ENCODE measurements at regions of chr4 and their contacts with region 1.

Region 1: DNA sequence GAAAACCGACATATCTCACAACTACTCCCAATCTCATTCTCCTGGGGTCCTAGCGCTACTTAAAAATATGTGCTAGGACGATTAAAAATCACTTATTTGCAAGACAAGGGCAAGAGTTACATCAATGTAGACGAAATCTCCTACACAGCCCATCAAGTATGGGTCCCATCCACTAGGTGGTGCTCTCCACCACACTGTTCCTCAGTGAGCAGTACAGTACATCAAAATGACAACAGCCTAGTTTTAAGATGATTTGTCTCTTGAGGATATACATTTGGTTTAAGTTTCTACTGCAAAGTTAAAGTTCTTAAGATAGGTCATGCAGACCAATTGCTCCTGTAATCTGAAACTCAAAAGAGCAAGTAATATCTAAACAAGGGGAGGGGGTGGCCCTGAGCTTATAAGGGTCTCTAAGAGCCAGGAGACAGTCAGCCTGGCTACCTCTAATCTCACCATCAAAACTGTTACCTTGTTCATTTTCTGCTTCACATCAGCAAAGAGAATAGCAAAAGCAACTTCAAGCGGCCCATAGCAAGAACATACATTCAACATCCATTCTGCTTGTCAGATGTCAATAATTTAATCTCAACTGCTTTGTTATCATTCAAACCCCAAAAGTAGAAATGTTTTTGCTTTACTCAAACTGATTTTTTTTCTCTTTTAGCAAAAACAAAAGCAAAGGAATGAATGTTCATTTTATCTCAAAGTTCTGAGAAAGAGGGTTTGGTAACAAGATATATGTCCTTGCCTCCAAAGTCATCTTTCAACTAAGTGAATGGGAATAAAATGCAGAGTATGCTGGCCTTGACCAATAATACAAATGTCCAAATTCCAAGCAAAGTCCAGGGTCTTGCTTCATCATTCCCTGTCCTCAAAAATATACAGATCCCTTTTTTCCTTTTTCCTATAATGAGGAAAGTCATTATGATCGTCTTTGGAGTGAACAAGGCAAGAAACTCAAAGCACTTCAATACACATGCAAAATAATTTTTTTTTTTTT is 53.1 kb downstream of the STX18 start:
- DNase-seq: peak; percentile 35
- ATAC-seq: peak; percentile 87
- H3K4me3 Mint-ChIP-seq: no peak overlapping the region
- H3K27ac Mint-ChIP-seq: no peak overlapping the region
- H3K4me1 Mint-ChIP-seq: peaks cover 21% of the 10 kb centered on the region
- H3K27me3 Mint-ChIP-seq: no peaks in the 10 kb centered on the region
- CTCF ChIP-seq: peak; percentile 94

Region 2: GRCh38 chr4:4507923-4508322 is 19.2 kb after region 1 on chr4:
- CTCF ChIA-PET with region 1: no interaction called
- POLR2A ChIA-PET with region 1: no interaction called
- intact Hi-C with region 1: loop called (anchors 1 kb)
- DNase-seq: no peak
- ATAC-seq: peak; percentile 28
- H3K4me3 Mint-ChIP-seq: no peak overlapping the region
- H3K27ac Mint-ChIP-seq: no peak overlapping the region
- H3K4me1 Mint-ChIP-seq: peaks cover 11% of the 10 kb centered on the region
- H3K27me3 Mint-ChIP-seq: no peaks in the 10 kb centered on the region
- CTCF ChIP-seq: no peak

Region 3: DNA sequence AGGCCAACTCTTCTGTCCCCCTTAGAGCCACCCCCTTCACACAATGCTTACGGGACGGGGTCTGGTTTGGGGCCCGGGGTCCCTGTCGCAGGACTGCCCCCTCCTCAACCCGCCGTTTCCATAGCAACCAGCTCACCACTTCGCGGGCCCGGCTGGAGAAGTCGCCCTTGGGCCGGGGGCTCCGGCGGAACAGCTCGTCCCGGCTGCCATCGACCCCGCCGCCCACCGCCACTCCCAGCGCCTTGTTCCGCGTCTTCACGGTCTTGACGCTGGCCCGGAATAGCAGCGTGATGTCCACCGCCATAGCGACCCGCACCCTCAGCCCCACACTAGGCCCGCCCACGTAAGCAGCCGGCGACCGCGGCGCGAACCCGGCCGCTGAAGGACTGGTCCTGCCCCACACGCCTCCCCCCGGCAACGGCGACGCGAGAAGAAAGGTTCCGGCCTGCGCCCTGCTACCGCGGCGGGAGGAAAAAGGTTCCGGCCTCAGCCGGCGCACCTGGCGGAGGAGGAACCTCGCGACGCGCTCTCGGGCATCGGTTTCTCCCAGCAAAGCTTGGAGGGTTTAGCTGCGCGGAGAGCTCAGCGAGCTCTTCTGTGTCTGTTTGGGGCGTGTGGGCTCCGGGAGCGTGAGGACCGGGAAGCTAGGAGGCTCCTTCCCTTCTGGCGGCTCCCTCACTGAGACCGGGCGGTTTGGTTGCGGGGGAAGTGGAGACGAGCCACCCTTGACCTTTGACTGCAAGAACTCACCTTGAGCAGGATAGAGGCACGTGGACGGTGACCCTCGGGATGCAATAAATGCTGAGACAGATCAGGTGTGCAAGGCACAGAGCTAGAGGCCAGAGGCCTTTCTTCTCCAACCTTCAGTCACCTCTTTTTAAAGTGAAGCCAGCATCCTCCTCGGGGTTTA is 53.2 kb after region 1 on chr4 and contains the start of gene STX18:
- CTCF ChIA-PET with region 1: no interaction called
- POLR2A ChIA-PET with region 1: interaction called, 7 read pairs
- intact Hi-C with region 1: loop called (anchors 1 kb)
- DNase-seq: peak; percentile 92
- ATAC-seq: peak; percentile 95
- H3K4me3 Mint-ChIP-seq: peak within 1 kb of the TSS; percentile 90
- H3K27ac Mint-ChIP-seq: peak within 1 kb of the TSS; percentile 88
- H3K4me1 Mint-ChIP-seq: peaks cover 42% of the 10 kb centered on the region
- H3K27me3 Mint-ChIP-seq: no peaks in the 10 kb centered on the region
- CTCF ChIP-seq: no peak
- total RNA-seq, gene STX18: 27.1 and 27.3 TPM in 2 replicates

Region 4: GRCh38 chr4:4852591-4853375 is 364.1 kb after region 1 on chr4:
- CTCF ChIA-PET with region 1: interaction called, 3 read pairs
- POLR2A ChIA-PET with region 1: no interaction called
- intact Hi-C with region 1: loop called (anchors 2 kb)
- DNase-seq: no peak
- ATAC-seq: peak; percentile 68
- H3K4me3 Mint-ChIP-seq: peak overlapping the region; percentile 84
- H3K27ac Mint-ChIP-seq: peak overlapping the region; percentile 47
- H3K4me1 Mint-ChIP-seq: peaks cover 29% of the 10 kb centered on the region
- H3K27me3 Mint-ChIP-seq: peaks cover 55% of the 10 kb centered on the region
- CTCF ChIP-seq: no peak

Region 5: DNA sequence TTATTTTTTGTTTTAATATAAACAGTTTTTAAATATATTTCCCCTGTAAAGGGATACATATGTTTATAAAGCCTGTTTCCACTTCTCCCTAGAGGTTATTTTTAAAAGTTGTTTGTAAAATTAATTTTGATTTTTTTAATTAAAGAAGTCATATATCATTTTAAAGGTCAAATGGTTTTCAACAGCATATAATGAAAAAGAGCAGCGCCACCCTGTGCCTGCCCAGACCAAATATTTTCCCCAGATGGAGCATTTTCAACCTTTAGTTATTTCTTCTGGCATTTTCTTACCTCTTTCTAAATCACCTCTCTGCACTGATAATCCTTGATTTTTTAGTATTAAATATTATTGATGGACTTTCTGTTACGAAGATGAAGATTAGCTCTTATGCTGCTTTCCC is 391.8 kb after region 1 on chr4:
- CTCF ChIA-PET with region 1: interaction called, 4 read pairs
- POLR2A ChIA-PET with region 1: no interaction called
- intact Hi-C with region 1: loop called (anchors 1 kb)
- DNase-seq: no peak
- ATAC-seq: no peak
- H3K4me3 Mint-ChIP-seq: no peak overlapping the region
- H3K27ac Mint-ChIP-seq: no peak overlapping the region
- H3K4me1 Mint-ChIP-seq: no peaks in the 10 kb centered on the region
- H3K27me3 Mint-ChIP-seq: peaks cover 39% of the 10 kb centered on the region
- CTCF ChIP-seq: no peak

Region 6: GRCh38 chr4:4941741-4942140 is 453.0 kb after region 1 on chr4:
- CTCF ChIA-PET with region 1: no interaction called
- POLR2A ChIA-PET with region 1: no interaction called
- intact Hi-C with region 1: no loop called
- DNase-seq: no peak
- ATAC-seq: no peak
- H3K4me3 Mint-ChIP-seq: no peak overlapping the region
- H3K27ac Mint-ChIP-seq: peak overlapping the region; percentile 31
- H3K4me1 Mint-ChIP-seq: peaks cover 57% of the 10 kb centered on the region
- H3K27me3 Mint-ChIP-seq: no peaks in the 10 kb centered on the region
- CTCF ChIP-seq: no peak

Region 7: GRCh38 chr4:5142726-5143125 is 654.0 kb after region 1 on chr4:
- CTCF ChIA-PET with region 1: no interaction called
- POLR2A ChIA-PET with region 1: no interaction called
- intact Hi-C with region 1: loop called (anchors 2 kb)
- DNase-seq: no peak
- ATAC-seq: no peak
- H3K4me3 Mint-ChIP-seq: no peak overlapping the region
- H3K27ac Mint-ChIP-seq: no peak overlapping the region
- H3K4me1 Mint-ChIP-seq: no peaks in the 10 kb centered on the region
- H3K27me3 Mint-ChIP-seq: no peaks in the 10 kb centered on the region
- CTCF ChIP-seq: no peak

Measured in activated B cell treated with CpG ODN at 0.5 μM for 24 hours (primary cell).